Panc1 (cell line): ENCODE measurements at regions of chr11 and their contacts with region 1.

Region 1: DNA sequence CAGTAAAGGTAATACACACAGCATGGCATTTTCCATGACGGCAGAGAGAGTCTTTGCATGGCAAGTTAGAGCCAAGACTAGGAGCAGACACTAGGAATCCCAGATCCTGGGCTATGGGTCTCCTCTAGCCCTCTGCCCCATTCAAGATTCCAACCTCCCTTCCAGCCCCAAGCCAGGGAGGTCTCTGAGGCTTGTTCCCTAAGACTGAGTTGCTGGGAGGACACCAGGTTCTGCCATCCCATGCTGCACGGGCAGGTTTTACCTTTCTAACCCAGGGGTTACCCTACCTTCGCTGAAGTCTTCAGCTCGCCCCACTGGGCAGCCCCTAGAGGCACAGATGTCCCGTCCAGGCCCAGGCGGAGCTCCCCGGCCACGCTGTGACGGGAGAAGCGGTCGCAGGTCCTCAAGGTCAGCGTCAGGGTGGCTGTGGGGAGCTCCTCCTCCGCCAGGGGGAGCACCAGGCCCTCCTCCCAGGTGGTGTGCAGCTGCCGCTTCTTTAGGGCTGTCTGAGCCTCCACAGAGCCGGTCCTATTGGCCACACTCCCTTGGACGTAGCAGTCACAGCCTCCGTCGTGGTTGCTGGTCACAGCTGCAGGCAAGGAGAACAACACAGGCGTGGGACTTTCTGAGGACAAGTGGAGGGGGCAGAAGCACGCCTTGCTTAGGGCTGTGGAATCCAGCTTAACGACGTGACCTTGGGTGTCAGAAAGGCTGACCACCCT is 33.8 kb downstream of the SYT13 start:
- DNase-seq: no peak
- ATAC-seq: peak; percentile 94
- H3K4me3 ChIP-seq: no peak overlapping the region
- H3K27ac ChIP-seq: no peak overlapping the region
- H3K4me1 ChIP-seq: no peaks in the 10 kb centered on the region
- H3K27me3 ChIP-seq: peaks cover 2% of the 10 kb centered on the region; the same call in 1 of the 2 replicates
- CTCF ChIP-seq: peak; percentile 88

Region 2: DNA sequence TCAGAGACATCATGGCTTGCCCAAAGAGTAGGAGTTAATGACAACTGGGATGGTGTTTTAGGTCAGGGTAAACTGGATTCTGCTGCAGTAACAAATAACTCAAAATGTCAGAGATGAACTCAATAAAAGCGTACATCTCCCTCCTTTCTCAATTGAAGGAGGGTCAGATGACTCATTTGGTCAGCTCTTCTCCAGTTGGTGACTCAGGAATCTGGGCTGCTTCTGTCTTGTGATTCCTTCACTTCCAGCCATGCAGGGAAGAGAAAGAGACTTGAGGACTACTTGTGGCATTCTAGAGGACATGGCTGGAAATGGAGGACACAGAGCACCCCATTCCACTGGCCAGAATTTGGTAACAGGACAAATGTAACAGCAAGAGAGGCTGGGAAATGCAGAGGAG is 37.1 kb after region 1 on chr11:
- CTCF ChIA-PET with region 1: interaction called, 3 read pairs
- POLR2A ChIA-PET with region 1: interaction called, 3 read pairs
- in situ Hi-C with region 1: no loop called
- intact Hi-C with region 1: loop called (anchors 2 kb)
- DNase-seq: no peak
- ATAC-seq: no peak
- H3K4me3 ChIP-seq: no peak overlapping the region
- H3K27ac ChIP-seq: no peak overlapping the region
- H3K4me1 ChIP-seq: no peaks in the 10 kb centered on the region
- H3K27me3 ChIP-seq: peaks cover 49% of the 10 kb centered on the region
- CTCF ChIP-seq: no peak